GM13976 (cell line): ENCODE measurements at regions of chr2 and their contacts with region 1.

Region 1: GRCh38 chr2:201363857-201364560 is 6.9 kb upstream of the FLACC1 start:
- DNase-seq: no peak
- CTCF ChIP-seq: peak; percentile 68

Region 2: DNA sequence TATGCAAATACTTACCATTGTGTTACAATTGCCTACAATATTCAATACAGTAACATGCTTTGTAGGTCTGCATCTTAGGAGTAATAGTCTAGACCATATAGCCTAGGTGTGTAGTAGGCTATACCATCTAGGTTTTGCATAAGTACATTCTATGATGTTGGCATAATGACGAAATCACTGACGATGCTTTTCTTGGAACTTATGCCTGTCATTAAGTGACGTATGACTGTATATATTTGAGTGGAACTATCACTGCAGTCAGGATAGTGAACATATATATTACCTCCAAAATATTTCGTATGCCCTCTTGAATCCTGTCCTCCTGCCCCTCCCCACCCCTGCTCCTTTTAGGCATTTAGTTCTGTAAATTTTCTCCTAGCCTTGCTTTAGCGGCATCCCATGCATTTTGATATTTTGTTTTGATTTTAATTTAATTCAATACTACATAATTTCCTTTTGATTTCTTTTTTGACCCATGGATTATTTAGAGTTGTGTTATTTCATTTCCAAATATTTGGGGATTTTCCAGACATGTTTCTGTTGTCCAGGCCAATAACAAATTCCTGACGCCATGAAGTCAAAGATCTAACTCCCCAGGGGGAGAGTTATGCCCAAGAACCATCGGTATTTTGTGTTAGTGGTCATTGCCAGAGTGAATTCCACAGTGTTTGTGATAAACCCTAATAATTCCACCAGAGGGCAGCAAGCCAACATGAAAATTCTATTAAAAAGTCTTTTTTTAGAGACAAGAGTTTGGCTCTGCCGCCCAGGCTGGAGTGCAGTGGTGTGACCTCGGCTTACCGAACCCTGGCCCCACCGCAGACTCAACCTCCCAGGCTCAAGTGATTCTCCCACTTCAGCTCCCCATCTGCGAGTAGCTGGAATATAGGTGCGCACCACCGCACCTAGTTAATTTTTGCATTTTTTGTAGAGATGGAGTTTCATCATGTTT is 127.9 kb before region 1 on chr2:
- in situ Hi-C with region 1: loop called (anchors 5 kb)
- DNase-seq: peak; percentile 51
- CTCF ChIP-seq: peak; percentile 53